WTC11 (cell line): ENCODE measurements at regions of chr12 and their contacts with region 1.

Region 1: DNA sequence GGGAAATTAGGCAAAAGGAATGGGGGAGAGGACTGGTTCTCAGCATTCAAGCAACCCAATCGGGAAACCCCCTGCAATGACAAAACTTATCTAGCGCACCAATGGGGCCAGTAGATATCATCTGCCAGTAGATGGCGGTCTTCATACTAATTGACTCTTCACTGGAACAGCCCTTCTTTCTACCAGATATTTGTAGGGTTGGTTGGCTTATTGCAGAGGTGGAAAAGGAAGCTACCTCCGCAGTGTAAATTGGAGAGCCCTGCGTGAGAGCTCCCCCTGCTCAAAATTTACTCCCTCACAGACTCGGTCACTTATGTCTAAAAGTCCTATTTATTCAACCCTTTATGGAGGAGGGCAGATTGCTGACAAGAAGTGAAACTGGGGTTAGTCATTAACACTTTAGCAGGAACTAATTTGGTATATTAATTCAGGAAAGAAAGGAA is 166.1 kb upstream of the CCND2 start:
- DNase-seq: peak; percentile 54
- ATAC-seq: peak; percentile 89
- H3K4me3 Mint-ChIP-seq: no peak overlapping the region
- H3K27ac Mint-ChIP-seq: no peak overlapping the region
- H3K4me1 Mint-ChIP-seq: peaks cover 20% of the 10 kb centered on the region
- H3K27me3 Mint-ChIP-seq: peaks cover 7% of the 10 kb centered on the region
- CTCF ChIP-seq: peak; percentile 49

Region 2: GRCh38 chr12:4068981-4069669 is 38.3 kb before region 1 on chr12:
- CTCF ChIA-PET with region 1: no interaction called
- POLR2A ChIA-PET with region 1: no interaction called
- DNase-seq: no peak
- ATAC-seq: no peak
- H3K4me3 Mint-ChIP-seq: no peak overlapping the region
- H3K27ac Mint-ChIP-seq: no peak overlapping the region
- H3K4me1 Mint-ChIP-seq: no peaks in the 10 kb centered on the region
- H3K27me3 Mint-ChIP-seq: no peaks in the 10 kb centered on the region
- CTCF ChIP-seq: no peak

Region 3: GRCh38 chr12:4091016-4091743 is 16.3 kb before region 1 on chr12:
- CTCF ChIA-PET with region 1: interaction called, 11 read pairs
- POLR2A ChIA-PET with region 1: no interaction called
- DNase-seq: no peak
- ATAC-seq: no peak
- H3K4me3 Mint-ChIP-seq: no peak overlapping the region
- H3K27ac Mint-ChIP-seq: no peak overlapping the region
- H3K4me1 Mint-ChIP-seq: peaks cover 9% of the 10 kb centered on the region; the same call in 1 of the 2 replicates
- H3K27me3 Mint-ChIP-seq: no peaks in the 10 kb centered on the region
- CTCF ChIP-seq: no peak

Region 4: DNA sequence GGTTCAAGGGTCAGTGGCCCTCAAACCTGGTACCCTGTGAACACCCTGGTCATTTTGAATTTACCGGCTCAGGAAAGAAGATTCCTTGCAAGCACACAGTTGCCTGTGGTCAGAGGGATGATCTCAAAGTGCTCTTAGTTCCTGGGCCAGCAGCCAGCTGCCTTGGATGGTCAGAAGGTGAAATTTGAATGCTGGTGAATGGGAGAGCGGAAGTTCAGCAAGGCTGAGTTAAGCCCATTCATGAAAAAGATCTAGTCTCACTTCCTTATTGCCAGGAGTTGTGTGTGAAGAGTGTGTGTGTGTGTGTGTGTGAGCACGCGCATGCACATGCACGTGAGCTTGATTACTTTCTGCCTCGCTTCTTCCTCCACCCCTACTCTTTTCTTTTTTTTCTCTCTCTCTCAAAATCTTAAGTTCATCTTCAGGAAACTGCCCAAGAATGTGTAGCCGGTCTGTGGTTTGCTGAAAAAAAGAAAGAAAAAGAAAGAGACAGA is 10.6 kb after region 1 on chr12:
- CTCF ChIA-PET with region 1: interaction called, 24 read pairs
- POLR2A ChIA-PET with region 1: interaction called, 3 read pairs
- DNase-seq: no peak
- ATAC-seq: no peak
- H3K4me3 Mint-ChIP-seq: no peak overlapping the region
- H3K27ac Mint-ChIP-seq: no peak overlapping the region
- H3K4me1 Mint-ChIP-seq: peaks cover 33% of the 10 kb centered on the region
- H3K27me3 Mint-ChIP-seq: no peaks in the 10 kb centered on the region
- CTCF ChIP-seq: no peak

Region 5: DNA sequence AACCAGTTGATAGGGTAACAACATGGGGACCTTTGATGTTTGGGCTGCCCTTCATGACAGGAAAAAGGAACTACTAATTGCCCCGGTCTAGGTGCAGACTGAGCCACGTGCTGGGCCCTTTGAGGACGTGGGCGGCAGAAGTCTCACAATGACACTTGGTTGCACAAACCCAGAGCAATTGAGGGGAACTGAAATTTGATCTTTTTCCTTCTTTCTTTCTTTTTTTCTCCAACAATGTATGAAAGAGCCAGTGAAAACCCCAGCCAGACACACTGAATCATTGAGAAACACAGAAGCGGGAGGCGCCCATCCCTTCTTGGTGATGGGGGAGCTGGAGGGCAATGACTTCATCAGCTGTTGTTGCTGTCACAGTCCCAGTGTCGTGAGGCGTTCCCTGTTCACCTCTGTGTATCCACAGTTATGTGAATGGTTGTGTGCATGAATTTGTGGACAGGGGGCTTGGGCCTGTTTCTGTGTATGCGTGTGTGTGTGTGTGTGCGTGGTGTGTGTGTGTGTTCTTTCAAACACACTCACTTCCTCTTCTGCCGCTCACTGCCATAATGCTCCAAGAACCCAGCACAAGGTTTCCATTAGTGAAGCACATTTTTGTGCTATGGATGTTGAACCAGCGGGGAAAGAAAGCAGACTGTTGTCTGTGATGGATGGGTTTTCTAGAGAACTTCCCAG is 28.6 kb after region 1 on chr12:
- CTCF ChIA-PET with region 1: interaction called, 16 read pairs
- POLR2A ChIA-PET with region 1: interaction called, 3 read pairs
- DNase-seq: no peak
- ATAC-seq: no peak
- H3K4me3 Mint-ChIP-seq: peak overlapping the region; percentile 55; the same call in 1 of the 2 replicates
- H3K27ac Mint-ChIP-seq: peak overlapping the region; percentile 97
- H3K4me1 Mint-ChIP-seq: peaks cover 74% of the 10 kb centered on the region
- H3K27me3 Mint-ChIP-seq: no peaks in the 10 kb centered on the region
- CTCF ChIP-seq: no peak

Region 6: DNA sequence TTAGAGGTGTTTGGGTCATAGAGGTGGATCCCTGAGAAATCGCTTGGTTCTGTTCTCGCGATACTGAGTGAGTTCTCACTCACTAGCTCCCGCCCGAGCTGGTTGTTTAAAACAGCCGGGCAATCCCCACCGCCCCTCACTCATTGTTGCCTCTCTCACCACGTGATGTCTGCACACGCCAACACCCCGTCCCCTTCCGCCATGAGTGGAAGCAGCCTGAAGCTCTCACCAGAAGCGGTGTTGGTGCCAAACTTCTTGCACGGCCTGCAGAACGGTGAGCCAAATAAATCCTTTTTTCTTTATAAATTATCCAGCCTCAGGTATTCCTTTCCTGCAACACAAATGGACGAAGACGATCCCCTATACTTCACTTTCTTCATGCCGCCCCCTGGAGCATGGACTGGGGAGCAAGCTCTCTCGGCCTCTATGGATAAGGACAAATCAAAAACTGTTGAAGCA is 120.7 kb after region 1 on chr12:
- CTCF ChIA-PET with region 1: interaction called, 10 read pairs
- POLR2A ChIA-PET with region 1: no interaction called
- DNase-seq: peak; percentile 56
- ATAC-seq: peak; percentile 88
- H3K4me3 Mint-ChIP-seq: peak overlapping the region; percentile 67
- H3K27ac Mint-ChIP-seq: peak overlapping the region; percentile 75
- H3K4me1 Mint-ChIP-seq: peaks cover 16% of the 10 kb centered on the region
- H3K27me3 Mint-ChIP-seq: no peaks in the 10 kb centered on the region; the same call in 1 of the 2 replicates
- CTCF ChIP-seq: no peak

Region 7: DNA sequence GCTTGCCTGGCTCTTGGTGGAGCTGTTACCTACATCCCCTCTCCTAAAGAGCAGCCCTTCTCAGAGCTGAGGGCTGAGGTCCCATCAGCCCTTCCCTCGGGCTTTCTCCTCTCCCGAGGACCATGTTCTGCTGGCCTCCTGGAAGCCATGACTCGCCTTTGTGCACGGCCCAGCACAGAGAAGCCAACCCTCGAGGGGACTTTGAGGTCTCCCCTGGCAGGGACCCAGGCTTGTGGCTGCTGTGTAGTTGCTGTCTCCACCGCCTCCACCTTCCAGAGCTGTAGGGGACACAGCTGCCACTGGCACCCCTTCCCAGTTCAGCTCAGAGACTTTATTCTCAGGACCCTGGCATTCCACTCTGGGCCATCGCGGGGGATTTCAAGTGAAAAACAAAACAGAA is 143.2 kb after region 1 on chr12:
- CTCF ChIA-PET with region 1: no interaction called
- POLR2A ChIA-PET with region 1: no interaction called
- DNase-seq: no peak
- ATAC-seq: 0 out of 2 replicates have a peak, but pooled peaks have one; percentile 32
- H3K4me3 Mint-ChIP-seq: no peak overlapping the region
- H3K27ac Mint-ChIP-seq: peak overlapping the region; percentile 12; the same call in 1 of the 2 replicates
- H3K4me1 Mint-ChIP-seq: peaks cover 32% of the 10 kb centered on the region
- H3K27me3 Mint-ChIP-seq: peaks cover 4% of the 10 kb centered on the region; the same call in 1 of the 2 replicates
- CTCF ChIP-seq: no peak

Region 8: GRCh38 chr12:4269279-4269991 is 162.0 kb after region 1 on chr12:
- CTCF ChIA-PET with region 1: interaction called, 22 read pairs
- POLR2A ChIA-PET with region 1: interaction called, 3 read pairs
- DNase-seq: peak; percentile 85
- ATAC-seq: peak; percentile 14
- H3K4me3 Mint-ChIP-seq: peak overlapping the region; percentile 91
- H3K27ac Mint-ChIP-seq: no peak overlapping the region
- H3K4me1 Mint-ChIP-seq: peaks cover 26% of the 10 kb centered on the region
- H3K27me3 Mint-ChIP-seq: peaks cover 25% of the 10 kb centered on the region
- CTCF ChIP-seq: no peak

Region 9: DNA sequence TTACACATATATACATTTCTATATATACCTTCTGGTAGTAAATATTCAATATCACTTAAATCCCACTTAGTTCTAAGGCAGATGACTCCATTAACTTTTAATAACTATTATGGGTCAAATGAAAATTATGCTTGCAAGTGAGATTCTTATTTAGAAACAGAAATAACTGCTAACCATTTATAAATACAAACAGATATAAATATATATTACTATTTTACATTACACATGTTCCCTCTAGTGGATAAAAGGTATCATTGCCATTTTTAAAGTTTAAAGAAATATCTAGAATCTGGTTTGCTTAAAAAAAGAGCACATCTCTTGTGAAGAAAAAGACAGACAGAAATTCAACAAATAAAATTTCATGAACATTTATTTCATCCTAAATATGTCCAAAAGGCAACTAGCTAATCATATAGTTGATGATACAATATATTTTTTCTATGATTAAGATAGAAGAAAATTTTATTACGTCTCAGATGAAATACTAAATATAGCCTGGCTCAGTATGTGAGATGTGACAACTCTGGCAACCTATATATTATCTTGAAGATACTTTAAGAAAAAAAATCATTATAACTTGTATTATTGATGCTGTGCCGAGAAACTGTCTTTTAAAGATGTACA is 419.6 kb after region 1 on chr12:
- CTCF ChIA-PET with region 1: no interaction called
- POLR2A ChIA-PET with region 1: no interaction called
- DNase-seq: no peak
- ATAC-seq: no peak
- H3K4me3 Mint-ChIP-seq: no peak overlapping the region
- H3K27ac Mint-ChIP-seq: no peak overlapping the region
- H3K4me1 Mint-ChIP-seq: no peaks in the 10 kb centered on the region
- H3K27me3 Mint-ChIP-seq: no peaks in the 10 kb centered on the region
- CTCF ChIP-seq: peak; percentile 58